ENCODE measurements at regions of chr7 and their contacts with region 1.

Region 1: DNA sequence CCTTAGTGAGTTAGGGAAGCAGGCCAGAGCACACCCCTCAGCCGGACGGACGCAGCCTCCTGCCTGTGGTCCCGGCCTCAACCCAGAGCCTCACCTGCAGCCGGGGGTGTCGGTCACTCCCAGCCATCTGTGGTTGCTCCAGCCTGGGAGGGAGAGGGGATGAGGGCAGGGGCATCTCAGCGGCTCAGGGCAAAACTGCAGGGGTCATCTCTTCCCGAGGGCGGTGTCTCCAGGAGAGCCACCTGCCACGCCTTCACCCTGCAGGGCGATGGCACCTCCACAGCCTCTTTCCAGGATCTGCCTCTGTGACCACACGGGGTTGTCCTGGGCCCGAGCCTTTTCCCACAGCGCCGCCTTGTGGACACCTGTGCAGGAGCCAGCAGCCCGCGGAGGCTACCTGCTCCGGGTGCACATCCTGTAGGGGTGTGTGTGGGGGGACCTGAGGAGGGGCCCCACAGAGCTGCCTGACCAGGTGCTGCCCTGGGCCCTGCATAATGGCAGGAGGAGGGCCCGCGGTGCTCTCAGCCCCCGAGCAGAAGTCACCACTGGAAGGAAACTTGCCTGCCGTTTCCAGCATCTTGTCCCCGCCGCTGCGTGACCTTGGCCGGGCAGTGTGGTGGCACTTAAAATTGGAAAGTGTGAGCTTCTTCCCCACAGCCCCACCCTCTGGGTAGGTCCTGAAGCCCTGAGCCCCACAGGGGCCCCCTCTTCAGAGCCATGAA is 21.6 kb upstream of the AP5Z1 start:
- DNase-seq: peak; percentile 39 to 95
- H3K4me3 ChIP-seq: no peak overlapping the region
- H3K27ac ChIP-seq: no peak overlapping the region
- H3K4me1 ChIP-seq: no peaks in the 10 kb centered on the region
- H3K27me3 ChIP-seq: no peaks in the 10 kb centered on the region
- CTCF ChIP-seq: peak; percentile 87 to 98 (median 95)
- EP300 ChIP-seq: no peak
- POLR2A ChIP-seq: no peak
- RAD21 ChIP-seq: peak; percentile 93 to 94

Region 2: DNA sequence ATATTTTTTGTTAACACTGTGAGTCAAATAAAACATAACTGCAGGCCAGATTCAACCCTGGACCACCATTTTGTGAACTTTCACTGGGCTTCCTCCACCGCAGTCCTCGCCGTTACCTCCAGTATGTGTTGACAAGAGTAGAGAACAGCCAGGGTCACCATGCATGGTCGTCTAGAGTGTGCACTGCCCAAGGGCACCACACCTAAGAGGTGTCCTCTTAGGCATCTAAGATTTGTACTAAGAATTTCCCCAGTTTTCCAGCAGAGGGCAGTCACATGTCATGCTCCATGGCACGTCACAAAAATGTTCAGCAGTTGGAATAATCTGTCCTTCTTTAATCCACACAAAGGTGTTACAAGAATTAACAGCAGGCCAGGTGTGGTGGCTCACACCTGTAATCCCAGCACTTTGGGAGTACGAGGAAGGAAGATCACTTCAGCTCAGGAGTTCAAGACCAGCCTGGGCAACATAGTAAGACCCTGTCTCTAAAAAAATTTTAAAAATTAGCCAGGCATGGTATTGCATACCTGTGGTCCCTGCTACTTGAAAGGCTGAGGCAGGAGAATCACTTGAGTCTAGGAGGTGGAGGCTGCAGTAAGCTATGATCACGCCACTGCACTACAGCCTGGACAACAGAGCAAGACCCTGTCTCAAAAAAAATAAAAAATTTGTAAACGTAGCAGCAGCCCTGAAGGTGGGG is 143.0 kb before region 1 on chr7:
- CTCF ChIA-PET with region 1: interaction called, 13 read pairs
- POLR2A ChIA-PET with region 1: no interaction called
- DNase-seq: peak in 1 of 2 experiments; percentile 51
- H3K4me3 ChIP-seq: no peak overlapping the region
- H3K27ac ChIP-seq: no peak overlapping the region
- H3K4me1 ChIP-seq: peaks cover 0 to 10% (median under 1%) of the 10 kb centered on the region in 4 experiments; a peak in 4 of 7 replicates
- H3K27me3 ChIP-seq: no peaks in the 10 kb centered on the region; a peak in 1 of 7 replicates
- CTCF ChIP-seq: peak in 2 of 3 experiments; percentile 68 to 73; a peak in 3 of 4 replicates
- EP300 ChIP-seq: no peak
- POLR2A ChIP-seq: no peak
- RAD21 ChIP-seq: peak; percentile 86 to 88

Region 3: DNA sequence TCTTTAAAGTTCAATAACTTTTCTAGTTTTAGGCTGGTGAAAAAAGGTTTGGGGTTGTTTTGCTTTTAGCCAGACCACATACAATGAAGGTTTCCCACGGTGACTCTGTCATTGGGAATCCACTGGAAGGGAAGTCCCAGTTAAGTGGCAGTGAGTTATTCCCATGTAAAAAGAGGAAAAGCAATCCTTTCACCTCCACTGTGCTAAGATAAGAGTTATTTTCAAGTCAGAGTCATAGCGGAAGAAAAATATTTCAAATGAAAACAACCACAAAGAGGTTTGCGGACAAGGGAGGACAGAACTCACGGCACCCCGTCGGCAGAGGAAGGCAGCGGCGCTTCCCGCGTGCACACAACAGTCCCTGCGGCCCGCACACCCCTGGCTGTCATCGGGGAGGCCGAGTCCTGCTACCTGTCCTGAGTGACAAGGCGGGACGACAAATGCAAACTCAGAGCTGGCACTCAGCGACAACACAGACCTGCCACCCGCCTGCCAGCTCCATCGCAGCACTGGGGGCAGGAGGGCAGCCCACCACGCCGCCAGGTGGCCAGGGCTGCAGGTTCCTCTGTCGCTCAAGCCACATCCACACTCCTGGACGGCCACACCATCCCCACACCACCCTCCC is 117.3 kb after region 1 on chr7:
- CTCF ChIA-PET with region 1: no interaction called
- POLR2A ChIA-PET with region 1: no interaction called
- DNase-seq: no peak
- H3K4me3 ChIP-seq: no peak overlapping the region
- H3K27ac ChIP-seq: no peak overlapping the region
- H3K4me1 ChIP-seq: peaks cover 0 to 10% (median 4%) of the 10 kb centered on the region in 4 experiments; a peak in 2 of 7 replicates
- H3K27me3 ChIP-seq: no peaks in the 10 kb centered on the region
- CTCF ChIP-seq: no peak
- EP300 ChIP-seq: no peak
- POLR2A ChIP-seq: no peak
- RAD21 ChIP-seq: no peak

Region 4: DNA sequence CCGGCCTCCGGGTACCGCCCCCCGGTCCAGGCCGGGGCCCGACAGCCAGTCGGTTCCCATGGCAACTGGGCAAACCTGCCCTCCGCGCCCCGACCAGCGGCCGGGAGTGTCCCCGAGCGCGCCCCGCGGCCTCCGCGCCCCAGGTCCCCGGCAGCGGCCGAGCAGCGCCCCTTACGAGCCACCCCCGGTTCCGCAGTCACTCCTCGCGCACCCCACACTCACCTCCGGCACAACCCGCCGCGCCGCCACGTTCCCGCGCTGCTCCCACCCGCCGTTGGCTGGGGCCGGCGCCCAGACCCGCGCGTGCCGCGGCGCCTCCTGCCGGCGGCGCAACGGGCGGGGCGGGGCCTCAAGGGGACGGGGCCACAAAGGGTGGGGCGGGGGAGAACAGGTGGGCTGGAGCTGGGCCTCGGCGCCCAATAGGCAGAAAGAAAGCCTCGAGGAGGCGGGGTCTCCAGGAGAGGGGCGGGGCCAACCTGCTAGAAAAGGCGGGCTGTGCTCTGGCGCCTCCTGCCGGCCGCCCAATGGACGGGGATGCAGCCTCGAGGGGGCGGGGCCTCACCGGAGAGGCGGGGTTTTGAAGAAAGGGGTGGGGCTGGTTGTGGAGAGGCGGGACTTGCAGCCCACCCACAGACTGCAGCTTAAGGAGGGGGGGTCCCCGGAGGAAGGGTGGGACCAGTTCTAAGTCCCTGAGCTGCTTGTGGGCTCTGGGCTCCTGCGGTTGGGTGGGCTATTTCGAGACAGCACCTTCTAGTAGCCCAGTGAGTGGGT is 129.7 kb after region 1 on chr7 and contains the start of gene RADIL:
- CTCF ChIA-PET with region 1: no interaction called
- POLR2A ChIA-PET with region 1: no interaction called
- DNase-seq: peak; percentile 84 to 99
- H3K4me3 ChIP-seq: peak within 1 kb of the TSS; percentile 41 to 63 (median 56)
- H3K27ac ChIP-seq: no peak within 1 kb of the TSS
- H3K4me1 ChIP-seq: peaks cover 0 to 5% (median 2%) of the 10 kb centered on the region in 4 experiments; a peak in 3 of 7 replicates
- H3K27me3 ChIP-seq: peaks cover 0 to 9% (median 2%) of the 10 kb centered on the region in 4 experiments; a peak in 2 of 7 replicates
- CTCF ChIP-seq: peak; percentile 75 to 81 (median 78)
- EP300 ChIP-seq: no peak
- POLR2A ChIP-seq: no peak
- RAD21 ChIP-seq: peak; percentile 62 to 67
- total RNA-seq, gene RADIL: 5.0 and 5.4 TPM in 2 replicates

Region 5: DNA sequence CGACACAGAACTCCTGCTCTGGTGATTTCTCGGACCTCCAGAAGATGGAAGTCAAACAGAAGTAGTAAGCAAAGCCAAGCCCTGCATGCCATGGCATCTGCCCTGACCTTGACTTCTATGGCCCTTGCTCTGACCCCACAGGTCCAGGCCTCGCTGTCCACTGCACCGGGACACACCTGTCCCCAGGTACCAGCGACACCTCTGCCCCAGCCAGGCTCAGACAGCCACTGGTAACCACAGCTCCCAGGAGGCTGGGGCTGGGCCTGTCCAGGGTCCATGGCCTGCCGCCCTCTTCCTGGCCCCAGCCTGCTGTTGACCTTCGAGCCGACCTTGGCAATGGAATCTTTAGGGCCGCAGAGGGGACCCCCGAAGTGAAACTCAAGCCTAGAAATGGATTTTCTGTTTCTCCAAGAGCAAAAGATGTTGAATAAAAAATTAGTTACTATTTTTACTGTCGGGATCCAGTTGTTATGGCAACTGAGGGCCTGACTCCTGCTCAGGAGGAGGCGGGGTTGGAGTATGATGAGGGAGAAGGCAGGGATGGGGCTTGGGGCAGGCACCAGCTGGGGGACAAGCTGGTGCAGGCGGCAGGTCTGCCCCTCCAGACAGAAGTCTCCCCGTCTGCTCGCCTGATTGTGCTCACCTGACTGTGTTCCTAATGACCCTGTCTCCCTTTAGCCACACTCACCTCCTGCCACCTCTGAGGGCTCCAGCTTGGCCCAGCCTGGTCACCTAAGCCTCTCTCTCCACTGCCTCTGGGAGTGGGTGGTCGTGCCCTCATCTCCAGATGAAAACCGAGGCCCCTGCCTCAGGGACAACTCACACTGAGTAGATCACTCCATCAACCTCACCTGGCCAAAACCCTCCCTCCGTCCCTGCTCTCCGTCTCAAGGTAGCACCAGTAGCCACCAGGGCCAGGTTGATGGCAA is 209.3 kb after region 1 on chr7:
- CTCF ChIA-PET with region 1: no interaction called
- POLR2A ChIA-PET with region 1: no interaction called
- DNase-seq: no peak
- H3K4me3 ChIP-seq: no peak overlapping the region
- H3K27ac ChIP-seq: no peak overlapping the region
- H3K4me1 ChIP-seq: peaks cover 0 to 2% (median 1%) of the 10 kb centered on the region in 4 experiments; a peak in 3 of 7 replicates
- H3K27me3 ChIP-seq: peaks cover 7 to 8% (median 8%) of the 10 kb centered on the region in 4 experiments; a peak in 6 of 7 replicates
- CTCF ChIP-seq: no peak
- EP300 ChIP-seq: no peak
- POLR2A ChIP-seq: no peak
- RAD21 ChIP-seq: no peak